Heart left ventricle (tissue), 16 donors: ENCODE measurements at regions of chr1 and their contacts with region 1.

Region 1: GRCh38 chr1:161225534-161226319 is at the start of gene TOMM40L:
- DNase-seq: peak; percentile 92 to 96 (median 94)
- ATAC-seq: peak; percentile 95 to 97 (median 96)
- H3K4me3 ChIP-seq: peak within 1 kb of the TSS; percentile 44 to 82 (median 75)
- H3K27ac ChIP-seq: peak within 1 kb of the TSS; percentile 74 to 94 (median 86)
- H3K4me1 ChIP-seq: peaks cover 0 to 32% (median 18%) of the 10 kb centered on the region in 12 donors
- H3K27me3 ChIP-seq: no peaks in the 10 kb centered on the region
- CTCF ChIP-seq: peak; percentile 32 to 75 (median 56)
- POLR2A ChIP-seq: peak in 1 of 2 donors; percentile 24
- total RNA-seq, gene TOMM40L: 24.1 to 37.1 (median 31.1) TPM

Region 2: DNA sequence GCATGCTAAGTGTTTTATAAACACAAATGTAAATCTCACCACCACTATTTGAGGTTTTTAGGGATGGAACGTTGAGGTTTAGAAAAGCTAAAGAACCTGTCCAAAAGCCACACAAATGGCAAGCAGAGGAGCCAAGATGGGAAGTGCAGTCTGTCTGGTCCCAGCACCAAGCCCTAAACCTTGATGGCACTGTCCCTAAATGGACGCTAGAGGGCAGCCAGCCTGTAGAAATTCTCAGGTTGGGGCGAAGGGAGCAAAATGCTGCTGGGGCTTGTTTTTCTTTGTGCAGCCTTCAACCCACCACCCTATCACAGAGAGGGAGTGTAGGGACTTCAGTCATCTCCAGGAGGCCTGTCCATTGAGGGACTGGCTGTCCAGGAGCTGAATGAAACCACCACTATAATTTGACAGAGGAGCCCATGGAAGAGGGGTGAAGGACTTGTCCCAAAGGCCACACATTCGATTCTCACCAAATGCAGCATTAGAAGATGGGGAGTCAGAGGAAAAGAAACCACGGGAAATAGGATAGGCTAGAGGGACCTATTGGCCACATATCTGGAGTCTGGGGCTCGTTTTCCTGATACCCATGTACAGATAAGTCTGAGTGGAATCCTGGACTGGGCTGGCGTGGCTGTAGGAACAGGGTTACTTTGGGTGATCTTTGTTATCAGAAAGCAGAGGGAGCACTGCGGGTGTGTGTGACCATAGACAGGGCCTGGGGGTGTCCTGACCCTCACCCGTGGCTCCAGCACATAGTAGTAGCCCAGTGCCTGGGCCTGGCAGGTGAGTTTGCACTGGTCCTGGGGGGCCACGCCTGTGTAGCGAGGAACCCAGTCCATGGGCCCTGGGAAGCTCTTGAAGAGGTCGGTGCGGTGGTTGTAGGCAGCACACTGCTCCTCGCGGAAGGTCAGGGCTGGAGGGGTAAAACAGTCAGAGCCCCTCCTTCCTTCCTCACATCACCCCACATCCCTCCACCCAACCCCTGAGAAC is 33.0 kb before region 1 on chr1:
- intact Hi-C with region 1: loop called in 2 of 10 experiments (anchors 1 to 5 kb)
- DNase-seq: peak in 4 of 5 donors; percentile 57 to 70 (median 68)
- ATAC-seq: peak; percentile 30 to 62 (median 50)
- H3K4me3 ChIP-seq: peak overlapping the region in 3 of 12 donors; percentile 56 to 62 (median 60)
- H3K27ac ChIP-seq: peak overlapping the region in 6 of 12 donors; percentile 3 to 98 (median 62)
- H3K4me1 ChIP-seq: peaks cover 0 to 73% (median 32%) of the 10 kb centered on the region in 12 donors
- H3K27me3 ChIP-seq: no peaks in the 10 kb centered on the region
- CTCF ChIP-seq: peak; percentile 80 to 92 (median 87)
- POLR2A ChIP-seq: no peak

Region 3: DNA sequence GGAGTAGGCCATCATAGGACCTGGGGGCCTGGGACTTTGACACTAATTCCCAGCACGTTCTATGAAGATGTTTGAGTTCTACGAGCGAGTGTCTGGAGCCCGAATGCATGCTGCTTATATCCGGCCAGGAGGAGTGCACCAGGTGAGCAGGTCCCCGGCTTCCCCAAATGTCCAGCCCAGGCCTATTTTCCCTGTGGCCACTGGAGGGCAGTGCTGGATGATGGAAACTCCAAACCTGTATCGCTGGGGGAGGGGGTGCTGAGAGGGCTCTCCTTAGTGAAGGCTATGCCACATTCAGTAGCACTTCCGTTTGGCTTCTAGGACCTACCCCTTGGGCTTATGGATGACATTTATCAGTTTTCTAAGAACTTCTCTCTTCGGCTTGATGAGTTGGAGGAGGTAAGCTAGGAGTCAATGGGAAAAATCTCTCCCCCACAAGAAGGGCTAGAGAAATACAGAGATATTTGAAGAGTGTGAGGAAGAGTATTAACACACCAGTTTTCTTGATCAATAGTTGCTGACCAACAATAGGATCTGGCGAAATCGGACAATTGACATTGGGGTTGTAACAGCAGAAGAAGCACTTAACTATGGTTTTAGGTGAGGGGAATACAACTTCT is 15.8 kb before region 1 on chr1:
- intact Hi-C with region 1: loop called in 3 of 10 experiments (anchors 1 to 2 kb)
- DNase-seq: peak; percentile 76 to 86 (median 82)
- ATAC-seq: peak; percentile 21 to 76 (median 58)
- H3K4me3 ChIP-seq: no peak overlapping the region
- H3K27ac ChIP-seq: peak overlapping the region in 5 of 12 donors; percentile 28 to 98 (median 88)
- H3K4me1 ChIP-seq: peaks cover 0 to 49% (median 27%) of the 10 kb centered on the region in 12 donors
- H3K27me3 ChIP-seq: no peaks in the 10 kb centered on the region
- CTCF ChIP-seq: peak; percentile 76 to 91 (median 87)
- POLR2A ChIP-seq: peak in 1 of 2 donors; percentile 13

Region 4: DNA sequence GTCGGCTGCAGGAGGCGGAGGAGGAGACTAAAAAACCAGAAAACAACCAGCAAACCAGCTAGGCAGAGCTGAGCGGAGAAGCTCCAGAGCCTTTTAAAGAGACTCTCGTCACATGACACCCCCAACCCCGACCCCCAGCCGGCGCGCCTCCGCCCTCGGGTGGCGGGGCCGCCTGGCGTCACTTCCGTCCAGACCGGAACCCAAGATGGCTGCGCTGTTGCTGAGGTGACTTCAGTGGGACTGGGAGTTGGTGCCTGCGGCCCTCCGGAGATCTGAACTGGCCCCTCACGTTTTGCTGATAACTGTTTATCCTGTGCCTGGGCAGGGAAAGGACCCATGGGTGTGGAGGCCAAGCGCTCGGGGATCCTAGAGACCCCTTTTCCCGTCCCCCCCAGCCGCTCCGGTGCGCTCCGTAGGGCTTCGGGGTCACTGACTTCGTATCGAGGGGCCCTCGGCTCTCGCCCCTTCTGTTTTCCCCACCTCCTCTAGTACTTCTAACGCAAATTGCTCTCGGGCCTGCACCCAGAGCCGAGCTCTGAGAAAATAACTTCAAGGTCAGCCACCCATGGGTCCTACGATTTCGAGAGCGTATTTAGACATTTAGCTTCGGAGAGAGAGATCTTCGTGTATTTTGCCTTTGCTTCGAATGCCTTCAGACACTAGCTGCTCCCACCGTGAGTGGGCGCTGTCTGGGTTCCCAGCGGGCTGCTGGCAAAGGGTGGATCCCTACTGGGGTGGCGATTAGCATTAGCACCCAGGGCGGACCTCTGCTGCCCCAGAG is 88.7 kb after region 1 on chr1 and contains the start of gene SDHC:
- intact Hi-C with region 1: loop called in 6 of 10 experiments (anchors 2 to 10 kb)
- DNase-seq: peak; percentile 90 to 95 (median 91)
- ATAC-seq: peak; percentile 98 to 100 (median 99)
- H3K4me3 ChIP-seq: peak within 1 kb of the TSS; percentile 70 to 96 (median 87)
- H3K27ac ChIP-seq: peak within 1 kb of the TSS; percentile 91 to 98 (median 94)
- H3K4me1 ChIP-seq: peaks cover 0 to 25% (median 15%) of the 10 kb centered on the region in 12 donors
- H3K27me3 ChIP-seq: no peaks in the 10 kb centered on the region
- CTCF ChIP-seq: peak in 6 of 12 donors; percentile 11 to 29 (median 22)
- POLR2A ChIP-seq: peak in 1 of 2 donors; percentile 72
- total RNA-seq, gene SDHC: 113 to 408 (median 314) TPM

Region 5: DNA sequence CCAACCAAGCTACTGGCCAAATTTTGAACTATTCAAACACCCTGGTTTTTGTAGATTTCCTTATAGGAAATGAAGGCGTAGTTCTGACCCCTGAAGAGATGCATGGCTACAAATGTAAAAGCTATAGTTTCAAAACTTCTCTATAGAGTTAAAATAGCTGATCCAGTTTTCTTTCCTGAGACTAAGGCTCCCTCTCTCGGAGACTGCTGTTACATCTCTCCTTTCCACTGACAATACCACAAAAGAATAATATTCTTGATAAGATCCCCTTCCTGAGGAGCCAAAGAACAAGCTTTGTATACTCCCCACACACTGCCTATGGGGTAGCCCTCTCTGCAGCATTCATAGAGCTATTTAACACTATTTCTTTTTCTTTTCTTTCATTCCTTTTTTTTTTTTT is 148.6 kb after region 1 on chr1:
- intact Hi-C with region 1: loop called in 3 of 10 experiments (anchors 5 kb)
- DNase-seq: no peak
- ATAC-seq: no peak
- H3K4me3 ChIP-seq: no peak overlapping the region
- H3K27ac ChIP-seq: no peak overlapping the region
- H3K4me1 ChIP-seq: peaks cover 0 to 4% (median 0%) of the 10 kb centered on the region in 12 donors
- H3K27me3 ChIP-seq: no peaks in the 10 kb centered on the region
- CTCF ChIP-seq: no peak
- POLR2A ChIP-seq: no peak

Region 6: DNA sequence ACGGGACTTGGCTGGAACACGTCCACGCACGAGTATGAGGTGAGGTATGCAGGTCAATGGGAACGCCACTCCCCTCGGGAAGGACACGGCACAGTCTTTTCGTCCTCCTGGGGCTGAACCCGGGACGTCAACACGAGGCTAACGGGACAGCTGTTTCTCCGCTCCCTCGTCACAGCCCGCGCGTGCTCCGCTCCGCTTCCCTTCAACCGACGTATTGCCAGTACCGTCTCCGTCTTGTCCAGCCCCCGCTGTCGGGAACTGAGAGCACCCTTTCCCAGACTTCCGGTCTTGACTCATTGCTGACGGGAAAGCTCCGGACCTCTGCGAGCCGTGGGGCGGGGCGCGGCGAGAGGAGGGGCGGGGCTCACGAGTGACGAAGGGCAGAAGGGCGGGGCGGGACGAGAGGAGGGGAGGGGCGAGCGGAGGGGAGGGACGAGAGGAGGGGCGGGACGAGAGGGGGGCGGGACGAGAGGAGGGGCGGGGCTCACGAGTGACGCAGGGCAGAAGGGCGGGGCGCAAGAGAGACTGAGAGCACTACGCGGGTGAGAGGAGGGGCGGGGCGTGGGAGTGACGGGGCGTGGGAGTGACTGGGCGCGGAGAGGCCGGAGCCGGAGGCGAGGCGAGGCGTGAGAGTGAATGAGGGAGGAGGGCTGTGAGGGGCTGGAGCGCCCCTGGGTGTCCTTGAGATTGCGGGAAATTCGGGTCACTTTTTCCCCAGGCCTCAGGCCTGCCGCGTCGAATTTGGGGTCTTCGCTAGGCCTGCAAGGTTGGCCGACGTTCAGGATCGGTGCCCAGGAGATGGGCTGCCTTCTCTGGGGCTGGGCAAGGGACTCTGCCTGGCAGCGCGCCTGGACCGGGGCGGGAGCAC is 164.2 kb after region 1 on chr1:
- intact Hi-C with region 1: loop called in 1 of 10 experiments (anchors 5 kb)
- DNase-seq: peak; percentile 97 to 99 (median 98)
- ATAC-seq: peak; percentile 93 to 97 (median 95)
- H3K4me3 ChIP-seq: peak overlapping the region; percentile 43 to 94 (median 70)
- H3K27ac ChIP-seq: peak overlapping the region; percentile 43 to 97 (median 90)
- H3K4me1 ChIP-seq: peaks cover 0 to 40% (median 7%) of the 10 kb centered on the region in 12 donors
- H3K27me3 ChIP-seq: no peaks in the 10 kb centered on the region
- CTCF ChIP-seq: no peak
- POLR2A ChIP-seq: peak; percentile 83 to 90